Colonic mucosa (tissue), 4 donors: ENCODE measurements at regions of chr20 and their contacts with region 1.

Region 1: GRCh38 chr20:34069341-34070078 is 42.5 kb downstream of the EIF2S2 start:
- DNase-seq: peak; percentile 81
- H3K4me3 ChIP-seq: no peak overlapping the region
- H3K27ac ChIP-seq: peak overlapping the region; percentile 16
- H3K4me1 ChIP-seq: no peaks in the 10 kb centered on the region
- H3K27me3 ChIP-seq: no peaks in the 10 kb centered on the region
- CTCF ChIP-seq: peak; percentile 76

Region 2: DNA sequence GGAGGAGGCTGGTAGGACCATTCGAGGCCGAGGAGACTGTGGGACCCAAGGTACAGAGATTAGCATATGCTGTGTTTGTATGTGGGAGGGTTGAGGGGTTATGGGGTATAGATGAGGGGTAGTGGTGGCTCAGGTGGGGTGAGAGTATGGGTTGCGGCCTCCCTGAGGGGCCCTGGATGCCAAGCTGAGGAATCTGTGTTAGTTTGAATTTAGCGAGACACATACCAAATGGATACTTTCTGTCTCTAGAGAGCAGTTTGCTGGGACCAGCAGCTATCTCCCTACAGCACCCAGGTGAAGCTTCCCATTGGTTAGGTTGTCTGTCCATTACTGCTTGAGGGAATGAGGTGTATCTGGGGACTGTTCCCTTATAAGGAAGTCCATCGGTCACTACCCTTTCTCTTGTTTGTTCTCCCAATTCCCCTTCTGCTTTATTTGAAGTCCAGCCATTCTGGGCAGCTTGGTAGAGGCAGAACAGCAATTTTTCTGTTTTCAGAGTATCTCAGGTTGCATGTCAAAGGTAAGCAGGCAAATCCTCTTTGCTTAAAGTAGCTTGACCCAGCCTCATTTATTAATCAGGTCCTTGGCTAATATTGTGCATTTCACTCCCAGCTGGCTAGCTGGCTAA is 243.1 kb before region 1 on chr20:
- intact Hi-C with region 1: no loop called
- DNase-seq: no peak
- H3K4me3 ChIP-seq: no peak overlapping the region
- H3K27ac ChIP-seq: peak overlapping the region; percentile 31
- H3K4me1 ChIP-seq: peaks cover 47% of the 10 kb centered on the region
- H3K27me3 ChIP-seq: no peaks in the 10 kb centered on the region
- CTCF ChIP-seq: no peak

Region 3: DNA sequence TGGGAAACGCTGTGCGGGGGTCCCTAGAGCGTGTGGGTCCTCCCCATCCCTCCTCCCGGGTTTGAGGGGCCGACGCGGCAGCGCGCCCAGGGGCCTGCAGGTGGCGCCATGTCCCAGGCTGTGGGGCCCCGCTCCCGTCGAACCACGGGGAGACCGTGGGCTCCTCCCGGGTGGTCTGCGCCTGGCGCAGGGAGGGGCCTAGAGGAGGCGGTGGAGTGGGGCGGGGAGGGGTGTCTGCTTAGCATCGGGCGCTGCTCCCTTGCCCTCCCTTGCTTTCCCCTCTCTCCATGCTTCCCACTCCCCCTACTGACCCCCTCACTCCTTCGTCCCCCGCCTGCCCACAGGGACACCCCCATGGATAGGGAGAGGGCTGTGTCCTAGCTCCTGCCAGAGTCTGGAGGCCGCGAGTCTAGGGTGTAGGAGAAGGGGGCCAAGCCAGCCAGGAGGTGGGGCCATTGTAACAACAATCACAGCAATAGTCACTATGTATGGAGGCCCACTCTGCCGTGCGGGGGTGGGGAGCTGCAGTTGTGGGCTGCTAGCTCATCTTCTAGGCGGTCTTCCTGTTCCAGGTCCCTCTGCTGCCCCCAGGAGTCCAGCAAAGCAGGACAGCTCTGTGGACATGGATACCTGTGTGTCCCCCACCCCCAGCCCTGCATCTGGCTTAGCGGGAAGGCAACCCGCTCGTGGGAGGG is 206.7 kb before region 1 on chr20:
- intact Hi-C with region 1: loop called (anchors 5 kb)
- DNase-seq: peak; percentile 40
- H3K4me3 ChIP-seq: no peak overlapping the region
- H3K27ac ChIP-seq: no peak overlapping the region
- H3K4me1 ChIP-seq: no peaks in the 10 kb centered on the region
- H3K27me3 ChIP-seq: no peaks in the 10 kb centered on the region
- CTCF ChIP-seq: peak; percentile 77

Region 4: GRCh38 chr20:33933469-33933909 is 136.0 kb before region 1 on chr20:
- intact Hi-C with region 1: loop called (anchors 5 kb)
- DNase-seq: peak; percentile 66
- H3K4me3 ChIP-seq: no peak overlapping the region
- H3K27ac ChIP-seq: no peak overlapping the region
- H3K4me1 ChIP-seq: no peaks in the 10 kb centered on the region
- H3K27me3 ChIP-seq: no peaks in the 10 kb centered on the region
- CTCF ChIP-seq: peak; percentile 54

Region 5: GRCh38 chr20:33992923-33993575 is 76.5 kb before region 1 on chr20:
- intact Hi-C with region 1: loop called (anchors 10 kb)
- DNase-seq: peak; percentile 100
- H3K4me3 ChIP-seq: peak overlapping the region; percentile 87
- H3K27ac ChIP-seq: peak overlapping the region; percentile 99
- H3K4me1 ChIP-seq: peaks cover 21% of the 10 kb centered on the region
- H3K27me3 ChIP-seq: no peaks in the 10 kb centered on the region
- CTCF ChIP-seq: no peak

Region 6: GRCh38 chr20:34129518-34130162 is 60.1 kb after region 1 on chr20:
- intact Hi-C with region 1: loop called (anchors 10 kb)
- DNase-seq: peak; percentile 67
- H3K4me3 ChIP-seq: no peak overlapping the region
- H3K27ac ChIP-seq: no peak overlapping the region
- H3K4me1 ChIP-seq: no peaks in the 10 kb centered on the region
- H3K27me3 ChIP-seq: no peaks in the 10 kb centered on the region
- CTCF ChIP-seq: peak; percentile 69

Region 7: DNA sequence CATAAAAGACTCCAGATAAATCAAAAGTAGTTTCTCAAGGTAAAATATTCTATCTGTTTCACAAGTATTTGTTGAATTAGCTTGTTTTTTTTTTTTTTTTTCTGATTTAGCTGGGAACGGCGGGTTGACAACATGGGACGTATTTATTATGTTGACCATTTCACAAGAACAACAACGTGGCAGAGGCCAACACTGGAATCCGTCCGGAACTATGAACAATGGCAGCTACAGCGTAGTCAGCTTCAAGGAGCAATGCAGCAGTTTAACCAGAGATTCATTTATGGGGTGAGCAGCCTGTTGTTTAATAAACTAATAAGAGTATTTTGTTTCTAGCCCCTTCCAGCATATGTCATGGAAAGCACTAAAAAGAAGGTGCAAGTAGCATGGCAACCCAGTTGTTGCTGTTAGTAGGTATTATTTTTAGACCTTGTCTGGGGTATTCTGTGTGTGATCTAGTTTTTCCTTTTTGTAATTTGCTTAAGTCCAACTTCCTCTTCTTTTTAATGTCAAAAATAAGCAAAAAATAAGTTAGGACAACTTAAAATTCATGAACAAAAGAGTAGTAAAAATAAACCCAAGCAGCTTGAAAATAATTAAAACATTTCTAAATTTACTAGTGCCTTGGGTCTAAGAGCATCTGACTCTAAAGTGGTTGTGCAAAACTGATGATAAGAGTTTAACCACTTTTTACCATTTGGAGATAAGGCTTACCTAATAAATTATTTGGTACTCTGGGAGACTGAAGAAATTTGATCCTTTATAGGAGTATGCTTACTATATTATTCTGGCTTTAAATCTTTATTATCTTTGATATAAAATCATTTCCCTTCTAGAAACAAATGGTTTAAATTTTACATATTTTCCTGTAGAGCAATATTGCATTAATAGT is 375.9 kb after region 1 on chr20:
- intact Hi-C with region 1: no loop called
- DNase-seq: no peak
- H3K4me3 ChIP-seq: no peak overlapping the region
- H3K27ac ChIP-seq: no peak overlapping the region
- H3K4me1 ChIP-seq: no peaks in the 10 kb centered on the region
- H3K27me3 ChIP-seq: no peaks in the 10 kb centered on the region
- CTCF ChIP-seq: no peak